Heart left ventricle (tissue), 16 donors: ENCODE measurements at regions of chr15 and their contacts with region 1.

Region 1: DNA sequence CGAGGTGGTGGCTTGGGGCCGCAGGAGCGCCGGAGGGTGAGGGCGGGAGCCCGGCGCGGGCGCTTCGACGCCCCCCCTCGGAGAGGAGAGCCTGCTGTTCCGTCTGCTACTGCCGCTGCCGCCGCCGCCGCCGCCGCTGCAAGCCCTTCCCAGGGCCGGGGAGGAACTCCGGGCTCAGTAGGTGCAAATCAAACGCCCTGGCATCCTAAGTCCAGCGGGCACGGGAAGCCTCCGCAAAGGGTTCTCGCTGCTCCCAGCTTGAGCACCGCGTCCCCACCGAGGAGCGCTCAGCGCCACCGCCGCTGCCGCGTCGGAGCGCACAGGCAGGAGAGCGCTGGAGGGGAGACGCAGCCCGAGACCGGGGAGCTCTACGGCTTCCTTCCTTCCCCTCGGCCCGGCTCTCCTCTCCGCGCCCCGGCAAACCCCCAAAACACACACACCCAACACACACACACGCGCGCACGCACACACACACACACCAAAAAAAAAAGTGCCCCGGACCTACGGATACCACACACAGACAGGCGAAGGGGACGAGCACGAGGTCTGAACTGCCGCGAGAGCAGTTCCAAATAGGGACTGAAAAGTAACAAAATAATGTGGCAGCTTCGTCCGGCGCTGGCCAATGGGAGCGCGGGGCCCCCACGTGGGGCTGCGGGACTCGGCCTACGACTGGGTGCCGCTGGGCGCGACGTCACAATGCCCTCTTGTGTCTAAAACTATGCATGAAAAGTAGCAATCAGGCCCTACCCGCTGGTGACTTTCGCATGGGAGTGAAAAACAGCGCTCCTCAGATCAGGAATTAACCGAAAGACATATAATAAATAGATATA is at the start of gene TLE3:
- DNase-seq: peak; percentile 99
- ATAC-seq: peak; percentile 66 to 76 (median 70)
- H3K4me3 ChIP-seq: peak within 1 kb of the TSS; percentile 59 to 93 (median 78)
- H3K27ac ChIP-seq: peak within 1 kb of the TSS; percentile 88 to 98 (median 96)
- H3K4me1 ChIP-seq: peaks cover 5 to 84% (median 61%) of the 10 kb centered on the region in 12 donors
- H3K27me3 ChIP-seq: peaks cover 0 to 10% (median 0%) of the 10 kb centered on the region in 9 donors
- CTCF ChIP-seq: peak; percentile 27 to 76 (median 56)
- POLR2A ChIP-seq: peak; percentile 83 to 94
- total RNA-seq, gene TLE3: 9.3 to 49.6 (median 16.4) TPM

Region 2: GRCh38 chr15:69475769-69476358 is 621.7 kb before region 1 on chr15:
- intact Hi-C with region 1: loop called in 4 of 10 experiments (anchors 10 kb)
- DNase-seq: peak; percentile 66 to 82 (median 69)
- ATAC-seq: peak; percentile 49 to 86 (median 75)
- H3K4me3 ChIP-seq: no peak overlapping the region
- H3K27ac ChIP-seq: no peak overlapping the region
- H3K4me1 ChIP-seq: no peaks in the 10 kb centered on the region
- H3K27me3 ChIP-seq: no peaks in the 10 kb centered on the region
- CTCF ChIP-seq: peak; percentile 84 to 95 (median 90)
- POLR2A ChIP-seq: no peak

Region 3: GRCh38 chr15:69593981-69594966 is 503.3 kb before region 1 on chr15:
- intact Hi-C with region 1: loop called in 4 of 10 experiments (anchors 2 to 10 kb)
- DNase-seq: peak; percentile 42 to 74 (median 53)
- ATAC-seq: peak; percentile 33 to 60 (median 52)
- H3K4me3 ChIP-seq: peak overlapping the region in 1 of 12 donors; percentile 1
- H3K27ac ChIP-seq: peak overlapping the region; percentile 71 to 98 (median 87)
- H3K4me1 ChIP-seq: peaks cover 0 to 30% (median 25%) of the 10 kb centered on the region in 12 donors
- H3K27me3 ChIP-seq: peaks cover 0 to 5% (median 0%) of the 10 kb centered on the region in 9 donors
- CTCF ChIP-seq: no peak
- POLR2A ChIP-seq: no peak

Region 4: GRCh38 chr15:69987492-69988482 is 109.8 kb before region 1 on chr15:
- intact Hi-C with region 1: no loop called
- DNase-seq: no peak
- ATAC-seq: no peak
- H3K4me3 ChIP-seq: no peak overlapping the region
- H3K27ac ChIP-seq: no peak overlapping the region
- H3K4me1 ChIP-seq: no peaks in the 10 kb centered on the region
- H3K27me3 ChIP-seq: peaks cover 0 to 82% (median 23%) of the 10 kb centered on the region in 9 donors
- CTCF ChIP-seq: no peak
- POLR2A ChIP-seq: no peak

Region 5: DNA sequence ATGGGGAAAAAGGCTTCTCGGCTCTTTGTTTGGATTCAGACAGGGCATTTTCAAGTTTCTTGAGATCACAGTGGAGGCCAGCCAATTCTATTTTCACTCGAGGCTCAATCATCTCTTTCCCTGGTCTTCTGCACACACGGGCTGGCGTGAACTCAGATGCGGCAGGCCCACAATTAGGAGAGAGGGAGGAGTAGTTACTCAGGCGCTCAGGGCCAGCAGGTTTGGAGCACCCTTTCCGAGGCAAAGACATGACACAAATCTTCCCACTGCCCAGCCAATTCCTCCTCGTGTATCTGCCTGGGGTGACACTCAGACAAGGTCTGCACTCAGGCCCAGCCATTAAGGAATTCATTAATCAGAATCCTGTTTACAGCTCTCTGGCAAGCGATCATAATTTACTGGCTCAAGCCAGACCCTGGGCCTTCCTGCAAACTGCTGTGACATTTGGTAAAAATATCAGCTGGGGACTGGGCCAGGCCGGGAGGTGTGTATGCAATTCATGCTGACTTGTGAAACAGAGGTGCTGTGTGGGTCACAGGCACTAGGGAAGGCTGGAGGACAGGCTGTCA is 68.2 kb after region 1 on chr15:
- intact Hi-C with region 1: loop called in 5 of 10 experiments (anchors 2 to 5 kb)
- DNase-seq: peak; percentile 79 to 92 (median 83)
- ATAC-seq: peak; percentile 91 to 94 (median 93)
- H3K4me3 ChIP-seq: no peak overlapping the region
- H3K27ac ChIP-seq: peak overlapping the region; percentile 21 to 86 (median 77)
- H3K4me1 ChIP-seq: peaks cover 5 to 36% (median 31%) of the 10 kb centered on the region in 12 donors
- H3K27me3 ChIP-seq: peaks cover 0 to 6% (median 0%) of the 10 kb centered on the region in 9 donors
- CTCF ChIP-seq: no peak
- POLR2A ChIP-seq: no peak

Region 6: DNA sequence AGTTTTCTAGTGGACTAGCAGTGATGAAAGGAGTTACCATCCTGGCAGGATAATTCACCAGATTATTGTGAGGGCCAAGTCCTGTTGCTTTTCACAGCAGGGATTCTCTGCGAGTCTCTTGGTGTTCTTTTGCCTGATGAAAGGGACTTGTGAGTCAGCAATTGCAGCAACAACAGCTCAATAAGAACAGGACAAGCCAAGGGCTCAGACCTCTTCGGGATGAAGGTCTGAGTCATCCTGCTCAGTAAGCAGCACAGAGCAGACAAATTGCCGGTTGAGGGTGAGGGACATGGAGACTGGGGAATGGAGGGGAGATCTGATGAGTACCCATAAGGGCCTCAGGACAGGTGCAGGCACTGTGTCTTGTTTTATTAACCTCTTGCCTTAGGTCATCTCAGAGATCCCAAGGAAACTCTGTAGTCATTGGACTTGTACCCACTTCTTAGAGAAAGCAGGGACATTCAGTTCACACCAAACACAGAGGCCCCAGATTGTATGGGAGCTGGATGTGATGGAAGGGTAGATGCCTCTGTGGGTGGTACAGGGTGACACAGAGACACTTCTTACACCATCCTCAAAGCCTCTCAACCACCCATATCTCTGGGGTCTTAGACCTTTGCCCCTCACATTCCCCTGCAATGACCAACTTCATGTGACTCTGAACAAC is 174.0 kb after region 1 on chr15:
- intact Hi-C with region 1: loop called in 8 of 10 experiments (anchors 1 to 10 kb)
- DNase-seq: peak in 2 of 5 donors; percentile 22 to 69
- ATAC-seq: peak in 3 of 4 donors; percentile 25 to 81 (median 75)
- H3K4me3 ChIP-seq: no peak overlapping the region
- H3K27ac ChIP-seq: peak overlapping the region in 4 of 12 donors; percentile 60 to 83 (median 72)
- H3K4me1 ChIP-seq: peaks cover 8 to 61% (median 35%) of the 10 kb centered on the region in 12 donors
- H3K27me3 ChIP-seq: no peaks in the 10 kb centered on the region
- CTCF ChIP-seq: no peak
- POLR2A ChIP-seq: no peak

Region 7: GRCh38 chr15:70362886-70363285 is 265.3 kb after region 1 on chr15:
- intact Hi-C with region 1: loop called in 2 of 10 experiments (anchors 10 kb)
- DNase-seq: peak in 4 of 5 donors; percentile 35 to 70 (median 40)
- ATAC-seq: peak in 3 of 4 donors; percentile 82 to 89 (median 87)
- H3K4me3 ChIP-seq: no peak overlapping the region
- H3K27ac ChIP-seq: no peak overlapping the region
- H3K4me1 ChIP-seq: no peaks in the 10 kb centered on the region
- H3K27me3 ChIP-seq: peaks cover 0 to 16% (median 0%) of the 10 kb centered on the region in 9 donors
- CTCF ChIP-seq: peak; percentile 68 to 82 (median 71)
- POLR2A ChIP-seq: no peak

Region 8: GRCh38 chr15:71151081-71151480 is 1053.5 kb after region 1 on chr15:
- intact Hi-C with region 1: no loop called
- DNase-seq: no peak
- ATAC-seq: no peak
- H3K4me3 ChIP-seq: no peak overlapping the region
- H3K27ac ChIP-seq: peak overlapping the region in 11 of 12 donors; percentile 69 to 87 (median 83)
- H3K4me1 ChIP-seq: peaks cover 0 to 87% (median 37%) of the 10 kb centered on the region in 12 donors
- H3K27me3 ChIP-seq: no peaks in the 10 kb centered on the region
- CTCF ChIP-seq: no peak
- POLR2A ChIP-seq: no peak